ENCODE measurements at regions of chr1 and their contacts with region 1.

Region 1: DNA sequence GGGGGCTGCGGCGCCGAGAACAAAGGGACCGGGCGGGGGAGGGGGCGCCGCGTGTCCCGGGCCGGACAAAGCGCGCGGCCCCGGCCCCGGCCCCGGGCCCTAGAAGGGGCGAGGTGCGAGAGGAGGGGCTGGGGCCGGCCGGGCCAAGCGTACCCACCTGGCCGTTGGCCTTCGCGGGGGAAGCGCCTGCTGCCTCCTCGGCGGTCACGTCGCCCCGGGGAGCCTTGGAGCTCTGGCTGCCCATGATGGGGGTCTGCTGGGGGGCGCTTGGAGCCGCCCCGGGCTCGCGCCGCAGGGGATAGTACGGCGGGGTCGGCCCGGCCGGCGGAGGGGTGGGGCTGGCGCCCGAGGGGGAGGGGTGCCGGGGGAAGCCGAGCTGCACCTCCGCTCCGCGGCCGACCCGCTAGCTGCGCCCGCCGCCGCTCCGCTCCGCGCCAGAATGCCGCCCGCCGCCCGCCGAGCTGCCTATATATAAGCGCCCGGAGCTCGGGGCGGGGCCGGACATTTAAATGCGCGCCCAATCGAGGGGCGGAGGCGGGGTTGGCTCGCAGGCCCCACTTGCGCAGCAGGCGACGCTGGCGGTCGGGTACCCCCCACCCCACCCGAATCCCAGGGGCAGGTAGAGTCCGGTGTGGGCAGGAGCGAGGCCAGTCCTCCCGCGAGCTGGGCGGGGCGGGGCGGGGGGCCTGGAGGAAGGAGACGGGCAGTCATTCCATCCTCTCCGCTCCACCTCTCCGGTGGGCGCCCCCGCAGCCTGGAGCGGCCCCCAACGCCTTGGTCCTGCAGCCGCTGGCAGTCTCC is at the start of gene MARCKSL1:
- DNase-seq: peak; percentile 82
- ATAC-seq: peak; percentile 43
- H3K4me3 Mint-ChIP-seq: peak within 1 kb of the TSS; percentile 95
- H3K27ac Mint-ChIP-seq: peak within 1 kb of the TSS; percentile 96
- H3K4me1 Mint-ChIP-seq: peaks cover 44% of the 10 kb centered on the region
- H3K27me3 Mint-ChIP-seq: peaks cover 16% of the 10 kb centered on the region
- CTCF ChIP-seq: no peak
- total RNA-seq, gene MARCKSL1: 442 to 450 TPM (median 443 TPM) in 3 replicates

Region 2: DNA sequence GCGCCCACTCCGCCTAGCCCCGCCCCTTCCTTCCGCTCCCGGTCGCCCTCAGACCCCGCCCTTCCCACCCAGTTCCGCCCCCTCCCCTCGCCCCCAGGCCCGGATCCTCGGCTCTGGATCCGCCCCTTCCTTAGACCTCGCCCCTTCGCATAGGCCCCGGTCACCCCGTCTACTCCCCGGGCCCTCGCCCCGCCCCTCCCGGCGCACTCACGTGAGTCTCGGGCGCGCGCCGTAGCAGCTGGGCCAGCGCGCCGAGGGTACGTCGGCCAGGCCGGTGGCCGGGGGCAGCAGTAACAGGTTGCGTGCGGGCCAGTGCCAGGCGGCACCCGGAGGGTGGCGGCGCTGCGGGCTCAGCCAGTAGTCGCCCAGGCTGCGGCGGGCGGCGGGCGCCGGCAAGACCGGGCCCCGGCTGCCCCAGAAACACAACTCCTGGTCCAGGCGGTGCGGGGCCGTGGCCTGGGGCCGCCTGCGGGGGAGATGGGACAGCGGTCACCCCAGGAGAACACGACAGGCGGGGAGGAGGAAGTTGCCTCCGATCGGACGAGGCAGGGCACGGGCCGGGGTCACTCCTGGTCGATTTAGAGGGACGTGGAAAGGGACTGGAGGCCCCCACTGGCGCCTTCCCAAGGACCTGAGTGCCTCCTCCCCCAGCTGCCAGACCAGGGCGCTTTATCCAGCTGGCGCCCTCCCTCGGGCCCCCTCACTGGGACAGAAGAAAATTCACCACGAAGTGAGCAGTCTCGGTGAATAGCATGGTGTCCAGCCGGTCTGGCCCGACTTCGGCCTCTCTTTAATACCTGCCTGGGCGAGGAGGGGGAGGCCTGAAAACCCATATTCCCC is 15.6 kb after region 1 on chr1:
- CTCF ChIA-PET with region 1: interaction called, 21 read pairs
- POLR2A ChIA-PET with region 1: interaction called, 18 read pairs
- DNase-seq: peak; percentile 96
- ATAC-seq: peak; percentile 96
- H3K4me3 Mint-ChIP-seq: peak overlapping the region; percentile 80
- H3K27ac Mint-ChIP-seq: peak overlapping the region; percentile 84; the same call in 1 of the 2 replicates
- H3K4me1 Mint-ChIP-seq: peaks cover 18% of the 10 kb centered on the region
- H3K27me3 Mint-ChIP-seq: peaks cover 55% of the 10 kb centered on the region
- CTCF ChIP-seq: no peak

Region 3: DNA sequence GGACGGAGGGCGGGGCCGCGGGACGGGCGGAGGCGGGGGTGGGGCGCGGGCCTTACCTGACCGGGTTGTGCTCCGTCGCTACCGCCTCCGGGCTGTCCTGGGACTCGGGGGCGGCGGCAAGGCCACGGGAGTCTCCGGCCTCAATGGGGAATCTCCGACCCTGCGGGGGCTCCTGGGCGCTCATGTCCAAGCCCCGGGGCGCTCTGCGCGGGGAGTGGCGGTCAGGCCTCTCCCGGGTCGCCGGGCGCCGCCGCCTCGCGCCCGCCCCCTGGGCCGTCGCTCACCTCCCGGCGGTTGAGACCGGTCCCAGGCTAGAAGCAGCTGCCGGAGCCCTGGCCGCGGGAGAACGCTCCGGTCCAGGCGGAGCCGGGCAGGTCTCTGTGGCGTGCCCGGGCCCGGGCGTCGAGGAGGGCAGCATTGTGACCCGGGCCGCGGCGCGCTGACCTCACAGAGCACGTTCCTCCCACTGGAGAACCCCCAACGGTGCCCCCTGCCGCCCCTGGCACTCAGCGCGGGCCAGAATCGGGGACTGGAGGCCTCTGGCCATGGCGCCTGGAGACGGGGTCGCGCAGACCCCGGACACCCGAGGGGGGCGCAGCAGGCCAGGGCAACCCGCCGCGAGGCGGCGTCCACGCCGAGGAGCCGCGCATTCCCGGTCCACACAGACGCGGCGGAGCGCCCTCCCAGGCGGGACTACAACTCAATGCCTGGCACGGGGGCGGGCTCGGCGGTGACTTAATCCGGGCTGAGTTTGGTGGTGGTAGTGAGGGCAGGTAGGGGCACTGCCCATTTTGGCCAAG is 25.9 kb after region 1 on chr1:
- CTCF ChIA-PET with region 1: interaction called, 4 read pairs
- POLR2A ChIA-PET with region 1: interaction called, 10 read pairs
- DNase-seq: peak; percentile 61
- ATAC-seq: peak; percentile 65
- H3K4me3 Mint-ChIP-seq: peak overlapping the region; percentile 52
- H3K27ac Mint-ChIP-seq: no peak overlapping the region; the same call in 1 of the 2 replicates
- H3K4me1 Mint-ChIP-seq: peaks cover 10% of the 10 kb centered on the region
- H3K27me3 Mint-ChIP-seq: peaks cover 44% of the 10 kb centered on the region
- CTCF ChIP-seq: no peak

Region 4: GRCh38 chr1:32372149-32372756 is 36.3 kb after region 1 on chr1:
- CTCF ChIA-PET with region 1: no interaction called
- POLR2A ChIA-PET with region 1: no interaction called
- DNase-seq: no peak
- ATAC-seq: no peak
- H3K4me3 Mint-ChIP-seq: no peak overlapping the region
- H3K27ac Mint-ChIP-seq: no peak overlapping the region
- H3K4me1 Mint-ChIP-seq: no peaks in the 10 kb centered on the region
- H3K27me3 Mint-ChIP-seq: no peaks in the 10 kb centered on the region
- CTCF ChIP-seq: no peak

Region 5: DNA sequence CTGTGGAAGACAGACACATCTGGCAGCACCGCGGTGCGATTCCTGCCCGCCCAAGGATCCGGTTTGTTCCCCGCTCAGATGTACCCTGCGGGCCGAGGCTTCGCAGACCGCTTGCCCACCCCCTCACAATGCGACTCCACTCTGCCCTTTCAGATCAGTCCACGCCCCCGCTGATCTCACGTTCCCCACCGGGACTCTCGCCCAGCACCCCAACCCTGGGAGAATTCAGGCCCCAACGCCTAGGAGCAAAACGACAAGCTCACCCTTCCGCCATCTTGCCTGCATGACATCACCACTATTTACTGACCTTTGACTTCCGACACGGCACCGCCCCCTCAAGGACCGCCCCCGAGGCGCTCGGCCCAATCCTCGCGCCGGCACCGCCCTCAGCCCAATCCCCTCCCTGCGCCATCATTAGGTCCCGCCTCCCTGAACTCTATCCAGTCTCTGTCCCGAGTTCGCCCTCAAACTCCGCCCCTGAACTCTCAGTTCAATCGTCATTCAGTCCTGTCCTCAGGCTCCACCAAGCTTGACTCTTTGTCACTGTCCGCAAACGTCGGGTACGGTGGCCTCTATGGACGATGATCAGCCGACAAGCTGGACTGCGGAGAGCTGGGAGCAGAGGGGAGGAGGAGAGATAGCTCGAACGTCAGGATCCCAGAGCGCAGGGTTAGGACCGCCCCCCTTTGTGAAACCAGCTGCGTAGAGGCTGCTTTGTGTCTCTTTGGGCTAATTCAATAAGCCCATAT is 58.3 kb after region 1 on chr1 and contains the start of gene BSDC1:
- CTCF ChIA-PET with region 1: interaction called, 4 read pairs
- POLR2A ChIA-PET with region 1: interaction called, 16 read pairs
- DNase-seq: peak; percentile 99
- ATAC-seq: peak; percentile 97
- H3K4me3 Mint-ChIP-seq: peak within 1 kb of the TSS; percentile 98
- H3K27ac Mint-ChIP-seq: peak within 1 kb of the TSS; percentile 100
- H3K4me1 Mint-ChIP-seq: peaks cover 12% of the 10 kb centered on the region
- H3K27me3 Mint-ChIP-seq: no peaks in the 10 kb centered on the region
- CTCF ChIP-seq: no peak
- total RNA-seq, gene BSDC1: 42.4 to 44.3 TPM (median 43.6 TPM) in 3 replicates

Measured in WTC11 (cell line).